ENCODE measurements at regions of chr6 and their contacts with region 1.

Region 1: DNA sequence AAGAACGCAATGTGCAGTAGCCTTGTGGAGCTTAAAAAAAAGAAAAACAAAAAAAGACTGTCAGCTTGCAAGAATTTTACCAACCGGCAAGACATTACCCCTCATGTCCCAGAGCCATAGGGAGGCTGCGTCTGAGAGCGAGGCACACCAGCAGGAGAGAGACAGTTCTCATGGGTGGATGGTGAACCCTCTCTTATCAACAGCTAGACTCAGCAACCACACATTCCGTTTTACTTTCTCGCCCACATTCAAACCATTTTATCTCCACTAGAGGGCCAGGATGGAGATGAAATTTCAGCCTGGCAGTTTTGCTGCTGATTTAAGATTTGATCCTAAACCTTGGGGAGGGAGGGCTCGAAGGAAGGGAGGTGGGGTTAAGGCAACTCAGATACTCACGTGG is 247.0 kb downstream of the ATXN1 start:
- DNase-seq: peak; percentile 26
- H3K4me3 Mint-ChIP-seq: peak overlapping the region; percentile 49
- H3K27ac Mint-ChIP-seq: peak overlapping the region; percentile 75
- H3K4me1 Mint-ChIP-seq: peaks cover 76% of the 10 kb centered on the region
- H3K27me3 Mint-ChIP-seq: no peaks in the 10 kb centered on the region

Region 2: GRCh38 chr6:16216501-16217155 is 297.6 kb before region 1 on chr6:
- intact Hi-C with region 1: no loop called
- DNase-seq: no peak
- H3K4me3 Mint-ChIP-seq: no peak overlapping the region
- H3K27ac Mint-ChIP-seq: no peak overlapping the region
- H3K4me1 Mint-ChIP-seq: peaks cover 12% of the 10 kb centered on the region
- H3K27me3 Mint-ChIP-seq: peaks cover 31% of the 10 kb centered on the region

Region 3: DNA sequence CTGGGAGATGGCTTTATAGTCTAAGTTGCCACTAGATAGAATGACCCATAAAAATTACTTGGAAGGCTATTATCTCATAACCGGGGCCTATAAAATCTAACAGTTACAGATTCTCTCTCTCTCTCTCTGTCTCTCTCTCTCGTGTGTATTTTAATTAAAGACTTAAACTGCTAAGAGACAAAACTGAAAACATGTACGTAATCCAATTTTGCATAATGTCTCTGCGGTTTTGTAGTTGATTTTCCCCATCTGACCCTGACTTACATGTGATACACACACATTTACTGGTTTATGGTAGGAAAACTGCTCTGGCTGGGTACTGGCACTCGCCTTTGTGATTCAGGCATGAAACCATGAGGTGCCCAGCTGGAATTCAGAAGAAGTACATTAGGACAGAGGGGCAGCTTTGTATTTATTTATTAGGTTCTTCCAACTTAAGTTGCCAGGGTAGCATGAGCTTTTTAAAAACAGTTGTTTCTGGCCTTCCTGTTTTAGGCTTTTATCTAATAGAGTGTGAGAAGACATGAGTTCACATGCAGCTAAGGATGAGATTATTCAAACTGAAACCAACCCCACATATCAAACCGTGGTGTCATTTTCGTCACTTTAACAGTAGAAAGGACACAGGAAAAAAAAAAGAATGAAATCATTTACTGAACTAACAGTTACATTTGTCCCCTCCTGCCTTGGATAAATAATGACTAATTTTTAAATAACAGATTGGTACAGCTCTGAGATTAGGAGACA is 93.4 kb before region 1 on chr6:
- intact Hi-C with region 1: loop called (anchors 1 kb)
- DNase-seq: peak; percentile 48
- H3K4me3 Mint-ChIP-seq: peak overlapping the region; percentile 72
- H3K27ac Mint-ChIP-seq: peak overlapping the region; percentile 98
- H3K4me1 Mint-ChIP-seq: peaks cover 54% of the 10 kb centered on the region
- H3K27me3 Mint-ChIP-seq: no peaks in the 10 kb centered on the region

Region 4: GRCh38 chr6:16493112-16493511 is 21.1 kb before region 1 on chr6:
- intact Hi-C with region 1: no loop called
- DNase-seq: no peak
- H3K4me3 Mint-ChIP-seq: no peak overlapping the region
- H3K27ac Mint-ChIP-seq: no peak overlapping the region
- H3K4me1 Mint-ChIP-seq: peaks cover 76% of the 10 kb centered on the region
- H3K27me3 Mint-ChIP-seq: no peaks in the 10 kb centered on the region

Region 5: DNA sequence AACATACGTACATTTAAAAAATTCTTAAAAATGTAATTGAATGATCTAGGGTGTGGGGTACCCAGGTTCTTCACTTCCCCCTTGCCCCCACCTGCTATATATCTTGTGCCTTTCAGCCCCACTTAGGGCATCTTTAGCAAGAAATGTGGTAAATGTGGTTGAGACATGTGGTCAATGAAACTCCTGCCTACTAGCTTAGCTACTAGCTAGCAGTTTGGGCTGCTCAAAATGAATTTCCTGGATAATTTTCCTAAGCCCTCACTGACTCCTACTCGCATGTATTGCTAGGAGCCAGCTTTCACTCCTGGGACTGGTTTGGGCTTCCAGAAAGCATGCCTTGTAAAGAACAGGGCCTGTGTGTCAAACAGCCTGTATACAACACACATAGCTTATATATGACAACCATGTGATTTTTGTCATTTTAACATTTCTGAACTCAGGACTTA is 10.3 kb before region 1 on chr6:
- intact Hi-C with region 1: loop called (anchors 1 kb)
- DNase-seq: no peak
- H3K4me3 Mint-ChIP-seq: no peak overlapping the region
- H3K27ac Mint-ChIP-seq: peak overlapping the region; percentile 68
- H3K4me1 Mint-ChIP-seq: peaks cover 59% of the 10 kb centered on the region
- H3K27me3 Mint-ChIP-seq: no peaks in the 10 kb centered on the region

Region 6: DNA sequence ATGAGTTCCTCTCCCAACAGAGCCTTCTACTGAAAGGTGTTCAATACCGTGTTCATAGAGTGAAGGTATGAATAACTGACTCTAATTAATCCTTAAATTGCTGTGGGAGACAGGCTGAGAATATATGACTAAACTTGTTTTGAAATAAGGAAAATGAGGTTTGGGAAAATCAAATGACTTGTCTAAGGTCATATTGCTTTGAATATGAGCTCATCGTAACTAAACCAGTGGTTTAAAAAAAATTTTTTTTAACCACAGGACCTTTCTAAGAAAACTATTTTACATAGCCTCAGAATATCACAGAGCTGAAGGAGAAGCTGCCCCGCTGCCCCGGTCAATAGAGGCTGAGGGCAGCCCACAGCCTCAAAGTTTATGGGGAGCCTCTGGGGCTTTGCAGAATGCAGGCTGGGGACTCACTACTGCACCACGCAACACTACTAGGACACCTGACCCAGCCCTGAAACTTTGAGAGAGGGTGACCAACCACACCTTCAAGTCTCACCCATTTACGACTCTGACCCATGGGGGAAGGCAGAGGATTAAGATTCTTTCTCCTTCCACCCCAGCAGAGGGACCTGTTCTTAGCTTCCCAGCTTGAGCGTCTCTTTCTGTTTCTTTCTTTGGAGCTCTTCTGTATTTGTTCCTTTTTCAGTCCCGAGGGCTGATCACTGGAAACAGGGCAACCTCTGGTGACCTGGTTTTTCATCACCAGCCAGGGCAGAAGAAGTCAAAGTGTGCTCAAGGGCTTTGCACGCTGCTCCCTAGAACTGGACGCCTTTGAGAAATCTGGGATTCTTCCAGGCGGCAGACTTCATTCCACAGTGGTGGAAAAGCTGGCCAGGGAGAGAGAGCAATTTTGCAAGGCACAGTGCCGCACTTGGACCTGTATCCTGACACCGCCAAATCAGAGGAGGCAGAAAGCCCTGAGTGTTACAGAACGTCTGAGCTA is 26.8 kb after region 1 on chr6:
- intact Hi-C with region 1: no loop called
- DNase-seq: no peak
- H3K4me3 Mint-ChIP-seq: no peak overlapping the region
- H3K27ac Mint-ChIP-seq: peak overlapping the region; percentile 58
- H3K4me1 Mint-ChIP-seq: peaks cover 49% of the 10 kb centered on the region
- H3K27me3 Mint-ChIP-seq: no peaks in the 10 kb centered on the region

Region 7: GRCh38 chr6:16684896-16685554 is 170.8 kb after region 1 on chr6:
- intact Hi-C with region 1: loop called (anchors 5 kb)
- DNase-seq: peak; percentile 49
- H3K4me3 Mint-ChIP-seq: no peak overlapping the region
- H3K27ac Mint-ChIP-seq: peak overlapping the region; percentile 86
- H3K4me1 Mint-ChIP-seq: peaks cover 83% of the 10 kb centered on the region
- H3K27me3 Mint-ChIP-seq: no peaks in the 10 kb centered on the region

Region 8: DNA sequence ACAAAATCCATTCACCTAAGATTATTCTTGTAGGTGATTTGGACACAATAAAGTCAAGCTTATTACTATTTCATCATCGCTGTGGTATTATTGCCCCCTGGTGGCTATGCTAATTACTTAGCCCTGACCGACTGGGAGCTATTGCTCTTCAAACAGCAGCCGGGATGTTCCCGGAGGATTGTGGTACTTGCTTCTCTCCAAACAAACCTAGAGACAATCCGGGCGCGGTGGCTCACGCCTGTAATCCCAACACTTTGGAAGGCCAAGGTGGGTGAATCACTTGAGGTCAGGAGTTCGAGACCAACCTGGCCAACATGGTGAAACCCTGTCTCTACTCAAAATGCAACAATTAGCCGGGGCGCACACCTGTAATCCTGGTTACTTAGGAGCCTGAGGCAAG is 572.2 kb after region 1 on chr6:
- intact Hi-C with region 1: loop called (anchors 10 kb)
- DNase-seq: no peak
- H3K4me3 Mint-ChIP-seq: no peak overlapping the region
- H3K27ac Mint-ChIP-seq: no peak overlapping the region
- H3K4me1 Mint-ChIP-seq: no peaks in the 10 kb centered on the region
- H3K27me3 Mint-ChIP-seq: peaks cover 10% of the 10 kb centered on the region